Kidney (tissue), 22 donors: ENCODE measurements at regions of chr1 and their contacts with region 1.

Region 1: GRCh38 chr1:24199289-24199900 is 12.3 kb upstream of the IFNLR1 start:
- DNase-seq: peak; percentile 58 to 81 (median 71)
- H3K4me3 ChIP-seq: no peak overlapping the region
- H3K27ac ChIP-seq: no peak overlapping the region
- H3K4me1 ChIP-seq: peaks cover 0 to 2% (median 0%) of the 10 kb centered on the region in 3 donors
- H3K27me3 ChIP-seq: no peaks in the 10 kb centered on the region
- CTCF ChIP-seq: peak; percentile 95

Region 2: GRCh38 chr1:24248859-24249258 is 49.5 kb after region 1 on chr1:
- intact Hi-C with region 1: no loop called
- DNase-seq: no peak
- H3K4me3 ChIP-seq: no peak overlapping the region
- H3K27ac ChIP-seq: no peak overlapping the region
- H3K4me1 ChIP-seq: no peaks in the 10 kb centered on the region
- H3K27me3 ChIP-seq: no peaks in the 10 kb centered on the region
- CTCF ChIP-seq: no peak

Region 3: GRCh38 chr1:24418898-24419628 is 219.7 kb after region 1 on chr1:
- intact Hi-C with region 1: no loop called
- DNase-seq: peak in 2 of 5 donors; percentile 23 to 79
- H3K4me3 ChIP-seq: no peak overlapping the region
- H3K27ac ChIP-seq: no peak overlapping the region
- H3K4me1 ChIP-seq: peaks cover 0 to 11% (median 3%) of the 10 kb centered on the region in 3 donors
- H3K27me3 ChIP-seq: no peaks in the 10 kb centered on the region
- CTCF ChIP-seq: no peak

Region 4: GRCh38 chr1:24635195-24635843 is 435.9 kb after region 1 on chr1:
- intact Hi-C with region 1: loop called (anchors 5 kb)
- DNase-seq: peak in 2 of 5 donors; percentile 75 to 87
- H3K4me3 ChIP-seq: no peak overlapping the region
- H3K27ac ChIP-seq: no peak overlapping the region
- H3K4me1 ChIP-seq: no peaks in the 10 kb centered on the region
- H3K27me3 ChIP-seq: no peaks in the 10 kb centered on the region
- CTCF ChIP-seq: peak; percentile 55